ENCODE measurements at regions of chr10 and their contacts with region 1.

Region 1: GRCh38 chr10:69629897-69630650 is at the start of gene FAM241B:
- DNase-seq: peak in 1 of 2 experiments; percentile 95
- H3K4me3 ChIP-seq: peak within 1 kb of the TSS; percentile 53 to 81 (median 79)
- H3K27ac ChIP-seq: no peak within 1 kb of the TSS; the same call in 1 of the 2 replicates
- H3K4me1 ChIP-seq: peaks cover 0 to 7% (median 5%) of the 10 kb centered on the region in 4 experiments; a peak in 5 of 7 replicates
- H3K27me3 ChIP-seq: peaks cover 0 to 9% (median 4%) of the 10 kb centered on the region in 4 experiments; a peak in 4 of 7 replicates
- CTCF ChIP-seq: peak; percentile 62 to 90 (median 83)
- EP300 ChIP-seq: 0 out of 3 replicates have a peak, but pooled peaks of 1 of the 2 experiments have one; percentile 38
- POLR2A ChIP-seq: peak in 1 of 2 experiments; percentile 71; a peak in 2 of 3 replicates
- RAD21 ChIP-seq: peak; percentile 47 to 56
- total RNA-seq, gene FAM241B: 18.6 and 19.3 TPM in 2 replicates

Region 2: GRCh38 chr10:69421611-69422314 is 208.3 kb before region 1 on chr10:
- CTCF ChIA-PET with region 1: no interaction called
- POLR2A ChIA-PET with region 1: no interaction called
- DNase-seq: no peak
- H3K4me3 ChIP-seq: no peak overlapping the region
- H3K27ac ChIP-seq: no peak overlapping the region
- H3K4me1 ChIP-seq: no peaks in the 10 kb centered on the region
- H3K27me3 ChIP-seq: no peaks in the 10 kb centered on the region
- CTCF ChIP-seq: no peak
- EP300 ChIP-seq: no peak
- POLR2A ChIP-seq: no peak
- RAD21 ChIP-seq: no peak

Region 3: GRCh38 chr10:69573056-69573806 is 56.8 kb before region 1 on chr10 and contains the start of gene NEUROG3:
- CTCF ChIA-PET with region 1: interaction called, 578 read pairs
- POLR2A ChIA-PET with region 1: interaction called, 16 read pairs
- DNase-seq: peak in 1 of 2 experiments; percentile 79
- H3K4me3 ChIP-seq: peak within 1 kb of the TSS; percentile 40 to 61 (median 46)
- H3K27ac ChIP-seq: no peak within 1 kb of the TSS
- H3K4me1 ChIP-seq: peaks cover 24 to 80% (median 52%) of the 10 kb centered on the region in 4 experiments
- H3K27me3 ChIP-seq: peaks cover 75 to 98% (median 98%) of the 10 kb centered on the region in 4 experiments
- CTCF ChIP-seq: no peak
- EP300 ChIP-seq: 0 out of 3 replicates have a peak, but pooled peaks of 1 of the 2 experiments have one; percentile 41
- POLR2A ChIP-seq: no peak
- RAD21 ChIP-seq: no peak; a peak in 1 of 4 replicates
- total RNA-seq, gene NEUROG3: 0.31 TPM in 1 of 2 replicates, not detected in the other

Region 4: GRCh38 chr10:69578508-69578991 is 51.5 kb before region 1 on chr10:
- CTCF ChIA-PET with region 1: interaction called, 578 read pairs
- POLR2A ChIA-PET with region 1: interaction called, 4 read pairs
- DNase-seq: peak in 1 of 2 experiments; percentile 60
- H3K4me3 ChIP-seq: peak overlapping the region; percentile 14 to 62 (median 24); a peak in 5 of 8 replicates
- H3K27ac ChIP-seq: no peak overlapping the region
- H3K4me1 ChIP-seq: peaks cover 7 to 41% (median 24%) of the 10 kb centered on the region in 4 experiments
- H3K27me3 ChIP-seq: peaks cover 70 to 90% (median 84%) of the 10 kb centered on the region in 4 experiments
- CTCF ChIP-seq: no peak
- EP300 ChIP-seq: no peak
- POLR2A ChIP-seq: no peak
- RAD21 ChIP-seq: no peak

Region 5: GRCh38 chr10:69612760-69613159 is 17.3 kb before region 1 on chr10:
- CTCF ChIA-PET with region 1: interaction called, 30 read pairs
- POLR2A ChIA-PET with region 1: no interaction called
- DNase-seq: no peak
- H3K4me3 ChIP-seq: no peak overlapping the region
- H3K27ac ChIP-seq: no peak overlapping the region
- H3K4me1 ChIP-seq: no peaks in the 10 kb centered on the region
- H3K27me3 ChIP-seq: no peaks in the 10 kb centered on the region
- CTCF ChIP-seq: no peak
- EP300 ChIP-seq: no peak
- POLR2A ChIP-seq: no peak
- RAD21 ChIP-seq: no peak

Measured in H1 (cell line).